Activated T-helper 2 cell treated with anti-CD3 and anti-CD28 coated beads, Interferon-gamma antibody, Interleukin-2, Interleukin-4, amounts not matched to agents 10 μg/mL and 5 μg/mL and 100 μg/mL, durations not matched to agents 14 hours and 24 hours and 36 hours (primary cell): ENCODE measurements at regions of chr7 and their contacts with region 1.

Region 1: DNA sequence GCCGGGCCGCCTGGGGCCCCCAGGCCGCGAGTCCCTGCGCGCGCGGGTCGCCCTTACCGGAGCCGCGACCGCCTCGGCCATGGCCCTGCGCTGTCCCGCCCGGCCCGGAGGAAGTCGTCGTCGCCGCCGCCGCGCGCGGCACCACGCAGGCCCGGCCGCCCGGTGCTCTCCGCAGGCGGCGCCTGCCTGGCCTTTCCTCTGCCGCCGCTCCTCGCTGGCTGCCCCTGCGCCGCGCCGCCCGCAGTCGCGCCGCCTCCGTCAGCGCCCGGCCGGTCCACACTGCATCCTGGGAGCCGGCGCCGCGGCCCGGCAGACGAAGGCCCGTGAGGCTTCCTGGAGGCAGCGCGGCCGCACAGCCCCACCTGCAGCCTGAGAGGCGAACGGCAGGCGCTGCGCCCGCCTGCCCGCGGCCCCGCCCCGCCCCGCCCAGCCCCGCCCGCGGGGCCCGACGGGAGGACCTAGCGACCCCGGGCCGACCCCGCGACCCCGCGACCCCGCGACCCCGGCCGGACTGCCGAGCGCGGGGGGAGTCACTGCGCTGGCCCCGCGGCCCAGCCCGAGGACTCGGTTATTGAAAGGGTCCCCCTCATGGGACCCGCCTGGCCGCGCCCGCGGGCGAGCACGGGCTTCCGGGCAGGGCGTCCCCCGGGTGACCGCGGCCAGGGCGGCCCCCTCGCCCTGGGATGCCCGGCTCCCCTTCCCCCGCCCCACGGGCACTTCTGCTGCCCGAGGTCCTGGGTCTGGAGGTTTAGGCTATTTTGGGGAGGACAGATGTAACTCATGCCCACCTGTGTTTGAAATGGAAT is at the start of gene ZNF746:
- DNase-seq: peak; percentile 78
- H3K4me3 Mint-ChIP-seq: peak within 1 kb of the TSS; percentile 96
- H3K27ac Mint-ChIP-seq: peak within 1 kb of the TSS; percentile 97
- H3K4me1 Mint-ChIP-seq: peaks cover 32% of the 10 kb centered on the region
- H3K27me3 Mint-ChIP-seq: no peaks in the 10 kb centered on the region
- total RNA-seq, gene ZNF746: 23.7 and 26.4 TPM in 2 replicates

Region 2: GRCh38 chr7:149261829-149262617 is 235.6 kb before region 1 on chr7 and contains the start of gene ZNF783:
- intact Hi-C with region 1: loop called (anchors 10 kb)
- DNase-seq: peak; percentile 84
- H3K4me3 Mint-ChIP-seq: peak within 1 kb of the TSS; percentile 82
- H3K27ac Mint-ChIP-seq: peak within 1 kb of the TSS; percentile 93
- H3K4me1 Mint-ChIP-seq: peaks cover 27% of the 10 kb centered on the region
- H3K27me3 Mint-ChIP-seq: no peaks in the 10 kb centered on the region
- total RNA-seq, gene ZNF783: 25.0 and 26.8 TPM in 2 replicates

Region 3: GRCh38 chr7:149422129-149422913 is 75.3 kb before region 1 on chr7:
- intact Hi-C with region 1: loop called (anchors 1 kb)
- DNase-seq: peak; percentile 68
- H3K4me3 Mint-ChIP-seq: peak overlapping the region; percentile 71
- H3K27ac Mint-ChIP-seq: peak overlapping the region; percentile 55
- H3K4me1 Mint-ChIP-seq: peaks cover 3% of the 10 kb centered on the region
- H3K27me3 Mint-ChIP-seq: peaks cover 5% of the 10 kb centered on the region

Region 4: DNA sequence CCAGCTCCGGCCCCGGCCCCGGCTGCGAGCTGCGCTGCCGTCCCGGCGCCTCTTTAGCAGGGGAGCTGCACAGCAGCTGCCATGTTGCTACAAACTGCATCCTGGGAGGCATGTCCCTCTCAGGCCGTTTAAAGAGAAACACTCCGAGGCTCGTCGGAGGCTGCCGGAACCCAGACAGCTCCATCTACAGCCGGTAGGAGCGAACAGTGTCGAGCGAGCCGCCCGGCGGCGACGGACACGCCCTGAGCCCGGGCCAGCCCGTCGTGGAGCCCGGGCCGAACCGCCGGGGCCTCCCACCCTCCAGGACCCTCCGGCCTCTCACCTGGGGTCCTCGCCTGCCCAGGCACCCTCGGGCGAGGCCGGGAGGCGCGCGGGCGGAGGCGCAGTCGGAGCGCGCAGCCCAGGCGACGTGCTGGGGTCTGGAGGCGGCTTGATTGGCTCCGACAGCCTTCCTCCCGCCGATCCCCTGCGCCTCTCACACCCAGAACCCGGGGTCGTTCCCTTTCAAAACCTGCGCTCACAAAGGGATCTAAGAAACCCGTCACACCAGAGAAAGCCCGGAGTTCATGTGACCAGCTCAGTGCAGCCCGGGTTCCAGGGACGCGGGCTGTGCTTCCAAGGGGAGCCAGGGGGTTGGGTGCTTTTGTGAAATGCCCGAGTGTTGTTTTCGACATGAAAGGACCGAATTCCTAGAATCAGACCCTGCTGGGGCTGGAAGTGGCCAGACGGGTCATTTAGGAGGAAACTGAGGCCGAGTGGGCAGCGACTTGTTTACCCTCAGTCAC is 37.0 kb before region 1 on chr7 and contains the start of gene ZNF777:
- intact Hi-C with region 1: loop called (anchors 1 kb)
- DNase-seq: peak; percentile 80
- H3K4me3 Mint-ChIP-seq: peak within 1 kb of the TSS; percentile 84
- H3K27ac Mint-ChIP-seq: peak within 1 kb of the TSS; percentile 79
- H3K4me1 Mint-ChIP-seq: peaks cover 19% of the 10 kb centered on the region
- H3K27me3 Mint-ChIP-seq: peaks cover 10% of the 10 kb centered on the region
- total RNA-seq, gene ZNF777: 16.6 TPM in 2 replicates

Region 5: DNA sequence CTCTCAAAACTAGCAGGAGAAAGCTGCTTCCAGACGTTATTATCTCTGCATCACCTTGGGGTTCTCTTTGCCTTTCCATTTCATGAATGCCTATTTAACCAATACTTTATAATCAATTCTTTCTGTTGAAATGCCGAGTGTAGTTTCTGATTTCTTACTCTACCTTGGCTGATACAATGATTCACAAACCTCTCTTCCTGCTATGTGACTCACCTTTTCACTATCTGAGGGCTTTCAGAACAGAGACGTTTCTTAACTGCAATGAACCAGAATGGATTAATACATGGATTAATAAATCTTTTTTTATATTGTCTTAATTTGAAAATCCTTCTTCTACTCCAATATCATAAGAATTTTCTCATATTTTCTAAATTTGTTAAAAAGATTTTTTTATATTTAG is 46.4 kb after region 1 on chr7:
- intact Hi-C with region 1: no loop called
- DNase-seq: no peak
- H3K4me3 Mint-ChIP-seq: no peak overlapping the region
- H3K27ac Mint-ChIP-seq: no peak overlapping the region
- H3K4me1 Mint-ChIP-seq: peaks cover 2% of the 10 kb centered on the region
- H3K27me3 Mint-ChIP-seq: no peaks in the 10 kb centered on the region

Region 6: DNA sequence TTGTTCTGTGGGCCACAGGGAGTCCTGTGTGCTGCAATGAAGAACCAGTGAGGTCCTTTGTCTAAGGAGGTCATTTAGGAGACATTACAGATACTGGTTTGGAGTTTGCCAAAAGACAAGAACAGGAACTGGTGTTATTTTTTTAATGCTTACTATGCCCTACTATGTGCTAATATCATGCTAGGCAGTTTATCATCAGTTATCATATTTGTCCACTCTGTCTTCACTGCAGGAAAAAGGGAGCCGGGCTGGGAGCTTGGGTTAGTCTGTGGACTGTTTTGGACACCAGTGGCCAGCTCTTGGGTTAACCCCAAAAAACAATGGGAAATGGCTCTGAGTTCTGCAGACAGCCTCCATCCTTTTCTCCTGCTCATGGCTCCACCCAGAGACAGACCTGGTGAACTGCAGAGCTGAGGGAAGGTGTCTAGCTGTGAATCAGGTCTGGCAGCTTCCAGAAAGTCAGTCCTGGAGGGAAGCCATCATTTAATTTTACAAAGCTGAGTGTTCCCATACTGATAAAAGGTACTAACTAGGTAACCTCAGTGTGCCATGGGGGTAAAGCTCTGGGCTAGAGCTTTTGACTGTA is 101.2 kb after region 1 on chr7:
- intact Hi-C with region 1: loop called (anchors 5 kb)
- DNase-seq: no peak
- H3K4me3 Mint-ChIP-seq: no peak overlapping the region
- H3K27ac Mint-ChIP-seq: no peak overlapping the region
- H3K4me1 Mint-ChIP-seq: peaks cover 28% of the 10 kb centered on the region
- H3K27me3 Mint-ChIP-seq: no peaks in the 10 kb centered on the region